Heart left ventricle (tissue), 16 donors: ENCODE measurements at regions of chr1 and their contacts with region 1.

Region 1: GRCh38 chr1:212477014-212477679 is 44.4 kb downstream of the NENF start:
- DNase-seq: peak; percentile 79 to 84 (median 82)
- ATAC-seq: peak; percentile 89 to 97 (median 94)
- H3K4me3 ChIP-seq: no peak overlapping the region
- H3K27ac ChIP-seq: no peak overlapping the region
- H3K4me1 ChIP-seq: peaks cover 0 to 15% (median 0%) of the 10 kb centered on the region in 12 donors
- H3K27me3 ChIP-seq: no peaks in the 10 kb centered on the region
- CTCF ChIP-seq: peak; percentile 85 to 96 (median 90)
- POLR2A ChIP-seq: no peak

Region 2: GRCh38 chr1:212381397-212382035 is 95.6 kb before region 1 on chr1:
- intact Hi-C with region 1: no loop called
- DNase-seq: no peak
- ATAC-seq: no peak
- H3K4me3 ChIP-seq: no peak overlapping the region
- H3K27ac ChIP-seq: no peak overlapping the region
- H3K4me1 ChIP-seq: no peaks in the 10 kb centered on the region
- H3K27me3 ChIP-seq: no peaks in the 10 kb centered on the region
- CTCF ChIP-seq: no peak
- POLR2A ChIP-seq: no peak

Region 3: DNA sequence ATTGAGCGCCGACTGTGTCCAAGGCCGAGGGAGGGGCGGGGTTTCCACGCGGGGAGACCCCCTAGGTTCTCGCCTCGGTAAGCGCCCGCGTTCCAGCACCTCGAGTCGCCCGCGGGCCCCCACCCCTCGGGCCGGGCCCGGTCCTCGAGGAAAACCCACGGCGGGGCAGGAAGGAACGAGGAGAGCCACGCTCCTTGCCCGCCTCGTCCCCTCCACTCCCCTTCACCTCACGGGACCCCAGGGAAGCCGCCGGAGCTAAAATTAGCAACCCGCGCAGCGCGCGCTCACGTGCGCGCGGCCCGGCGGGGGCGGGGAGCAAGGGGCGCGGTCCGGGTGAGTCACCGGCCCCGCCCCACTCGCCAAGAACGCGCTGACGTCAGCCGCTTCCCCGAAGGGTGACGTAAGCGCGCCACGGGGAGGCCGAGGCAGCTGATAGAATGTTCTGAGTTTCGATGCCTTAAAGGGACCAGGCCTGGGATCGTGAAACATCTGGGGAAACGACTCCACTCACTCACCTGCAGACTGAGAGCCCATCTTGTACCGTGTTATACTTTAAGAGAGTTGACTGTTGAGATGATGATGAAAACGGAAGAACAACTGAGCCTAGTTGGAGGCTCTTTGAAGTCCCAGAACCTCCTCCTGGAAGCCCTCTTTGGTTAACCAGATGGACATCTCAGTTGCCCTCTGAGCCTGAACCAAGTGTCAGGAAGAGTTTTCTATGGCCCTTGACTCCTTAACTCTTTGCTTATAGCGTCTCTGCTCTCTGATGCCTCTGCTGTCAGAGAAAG is 81.7 kb after region 1 on chr1:
- intact Hi-C with region 1: loop called in 5 of 10 experiments (anchors 5 to 10 kb)
- DNase-seq: peak; percentile 93 to 96 (median 95)
- ATAC-seq: peak; percentile 92 to 96 (median 94)
- H3K4me3 ChIP-seq: peak overlapping the region; percentile 52 to 84 (median 74)
- H3K27ac ChIP-seq: peak overlapping the region; percentile 79 to 98 (median 94)
- H3K4me1 ChIP-seq: peaks cover 0 to 22% (median 7%) of the 10 kb centered on the region in 12 donors
- H3K27me3 ChIP-seq: no peaks in the 10 kb centered on the region
- CTCF ChIP-seq: no peak
- POLR2A ChIP-seq: peak in 1 of 2 donors; percentile 66

Region 4: GRCh38 chr1:212608209-212608955 is 131.2 kb after region 1 on chr1 and contains the start of gene ATF3:
- intact Hi-C with region 1: loop called in 8 of 10 experiments (anchors 2 to 5 kb)
- DNase-seq: peak; percentile 99 to 100 (median 100)
- ATAC-seq: peak; percentile 95 to 98 (median 97)
- H3K4me3 ChIP-seq: peak within 1 kb of the TSS; percentile 62 to 89 (median 75)
- H3K27ac ChIP-seq: peak within 1 kb of the TSS; percentile 90 to 99 (median 95)
- H3K4me1 ChIP-seq: peaks cover 0 to 64% (median 45%) of the 10 kb centered on the region in 12 donors
- H3K27me3 ChIP-seq: peaks cover 0 to 30% (median 0%) of the 10 kb centered on the region in 9 donors
- CTCF ChIP-seq: no peak
- POLR2A ChIP-seq: peak; percentile 76 to 99
- total RNA-seq, gene ATF3: 4.6 to 49.0 (median 11.0) TPM

Region 5: DNA sequence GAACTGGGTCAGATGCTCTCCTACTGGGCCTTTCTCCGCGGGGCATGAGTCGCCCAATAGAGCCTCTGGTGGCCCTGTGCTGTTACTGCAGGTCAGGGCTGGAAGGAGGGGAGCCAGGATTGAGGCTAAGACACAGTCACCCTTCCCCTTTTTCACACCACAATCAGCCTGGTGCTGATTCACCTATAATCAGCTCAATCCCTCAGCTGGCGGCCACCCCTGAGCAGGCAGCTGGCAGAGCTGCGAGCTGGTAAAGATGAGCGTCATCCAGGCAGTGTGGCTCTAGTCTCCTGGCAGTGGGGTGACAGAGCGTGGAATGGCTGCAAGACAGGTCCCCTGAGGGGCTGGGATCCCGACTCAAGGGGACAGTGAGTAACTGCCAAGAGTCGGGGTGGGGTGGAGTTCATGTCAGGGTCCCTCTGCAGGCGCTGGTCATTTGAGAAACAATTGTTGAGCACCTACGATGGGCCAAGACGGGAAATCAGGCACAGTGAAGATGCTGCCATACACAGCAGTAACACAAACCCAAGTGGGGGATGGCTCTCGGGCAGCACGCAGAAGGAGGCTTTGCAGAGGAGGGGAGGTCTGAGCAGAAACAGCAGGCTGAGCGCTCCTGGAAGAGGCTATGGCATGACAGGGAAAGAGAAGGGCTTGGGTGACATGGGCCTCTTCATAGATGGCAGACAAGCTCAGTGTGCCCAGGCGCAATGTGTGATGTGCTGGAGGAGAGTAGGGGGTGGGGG is 153.2 kb after region 1 on chr1:
- intact Hi-C with region 1: loop called in 9 of 10 experiments (anchors 1 to 5 kb)
- DNase-seq: peak; percentile 60 to 82 (median 69)
- ATAC-seq: peak; percentile 65 to 93 (median 92)
- H3K4me3 ChIP-seq: no peak overlapping the region
- H3K27ac ChIP-seq: no peak overlapping the region
- H3K4me1 ChIP-seq: peaks cover 0 to 23% (median 5%) of the 10 kb centered on the region in 12 donors
- H3K27me3 ChIP-seq: no peaks in the 10 kb centered on the region
- CTCF ChIP-seq: peak; percentile 72 to 90 (median 82)
- POLR2A ChIP-seq: no peak

Region 6: GRCh38 chr1:212782422-212783154 is 305.4 kb after region 1 on chr1:
- intact Hi-C with region 1: loop called in 8 of 10 experiments (anchors 2 to 10 kb)
- DNase-seq: peak in 1 of 5 donors; percentile 40
- ATAC-seq: peak in 2 of 4 donors; percentile 38 to 54
- H3K4me3 ChIP-seq: no peak overlapping the region
- H3K27ac ChIP-seq: peak overlapping the region in 1 of 12 donors; percentile 71
- H3K4me1 ChIP-seq: peaks cover 0 to 28% (median 0%) of the 10 kb centered on the region in 12 donors
- H3K27me3 ChIP-seq: no peaks in the 10 kb centered on the region
- CTCF ChIP-seq: peak; percentile 47 to 70 (median 58)
- POLR2A ChIP-seq: no peak

Region 7: DNA sequence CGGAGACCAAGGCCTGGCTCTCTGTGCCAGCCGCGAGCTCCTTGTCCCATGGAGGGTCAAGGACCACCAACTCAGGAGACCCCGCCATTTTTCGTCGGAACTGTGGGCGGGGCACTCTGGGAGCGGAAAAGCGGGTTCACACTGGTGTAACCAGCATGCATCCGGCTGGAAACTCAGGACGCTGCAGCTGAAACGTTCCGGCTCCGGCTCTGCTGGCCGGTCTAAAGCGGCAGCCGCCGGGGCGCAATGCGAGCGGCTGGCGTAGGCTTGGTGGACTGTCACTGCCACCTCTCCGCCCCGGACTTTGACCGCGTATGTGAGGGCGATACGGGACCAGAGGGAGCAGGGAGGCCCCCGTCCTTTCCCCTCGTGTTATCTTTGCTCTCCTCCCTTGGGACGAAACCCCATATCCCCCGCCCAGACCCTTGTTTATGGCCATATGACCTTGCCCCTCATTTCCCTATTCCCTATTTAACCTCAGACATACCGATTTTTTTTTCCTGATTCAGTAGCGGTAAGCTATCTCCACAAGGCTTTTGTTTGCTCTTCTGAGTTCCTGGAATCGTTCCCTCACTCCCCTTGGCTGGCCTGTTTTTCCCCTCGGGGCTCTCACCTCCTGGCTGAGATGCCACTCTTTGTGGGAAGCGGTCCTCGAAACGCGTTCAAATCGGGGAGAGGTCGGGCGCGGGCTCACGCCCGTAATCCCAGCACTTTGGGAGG is 314.7 kb after region 1 on chr1 and contains the starts of genes NSL1 and TATDN3:
- intact Hi-C with region 1: loop called in 4 of 10 experiments (anchors 10 kb)
- DNase-seq: peak; percentile 86 to 96 (median 90)
- ATAC-seq: peak; percentile 93 to 97 (median 96)
- H3K4me3 ChIP-seq: peak within 1 kb of the TSS; percentile 65 to 100 (median 81)
- H3K27ac ChIP-seq: peak within 1 kb of the TSS; percentile 79 to 97 (median 94)
- H3K4me1 ChIP-seq: peaks cover 0 to 57% (median 20%) of the 10 kb centered on the region in 12 donors
- H3K27me3 ChIP-seq: no peaks in the 10 kb centered on the region
- CTCF ChIP-seq: peak in 2 of 12 donors; percentile 12 to 15
- POLR2A ChIP-seq: peak in 1 of 2 donors; percentile 75
- total RNA-seq, gene NSL1: 22.6 to 33.3 (median 24.9) TPM
- total RNA-seq, gene TATDN3: 20.2 to 30.3 (median 24.7) TPM

Region 8: GRCh38 chr1:213008564-213008963 is 531.4 kb after region 1 on chr1:
- intact Hi-C with region 1: loop called in 1 of 10 experiments (anchors 10 kb)
- DNase-seq: no peak
- ATAC-seq: no peak
- H3K4me3 ChIP-seq: no peak overlapping the region
- H3K27ac ChIP-seq: no peak overlapping the region
- H3K4me1 ChIP-seq: peaks cover 0 to 12% (median 0%) of the 10 kb centered on the region in 12 donors
- H3K27me3 ChIP-seq: no peaks in the 10 kb centered on the region
- CTCF ChIP-seq: no peak
- POLR2A ChIP-seq: no peak